ENCODE measurements at regions of chr5 and their contacts with region 1.

Region 1: DNA sequence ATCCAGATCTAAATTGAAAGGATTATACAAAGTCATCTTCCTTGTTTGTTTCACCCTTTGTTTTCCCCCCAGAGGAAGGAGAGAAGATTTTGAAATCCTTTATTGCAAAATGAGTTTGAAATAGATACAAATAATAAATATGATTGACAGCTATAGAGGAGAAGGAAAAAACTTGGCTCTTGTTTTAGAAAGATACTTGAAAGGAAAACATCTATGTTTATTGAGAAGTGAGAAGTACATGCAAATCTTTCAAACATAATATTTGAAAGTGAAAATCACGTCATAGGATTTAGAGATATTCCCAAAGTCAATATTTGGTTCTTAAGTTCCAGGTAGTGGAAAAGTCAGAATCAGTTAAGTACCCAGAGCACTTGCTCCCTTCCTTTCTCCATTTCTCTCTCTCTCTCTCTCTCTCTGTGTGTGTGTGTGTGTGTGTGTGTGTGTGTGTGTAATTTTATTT is 27.2 kb downstream of the PAM start:
- DNase-seq: no peak
- H3K4me3 ChIP-seq: no peak overlapping the region
- H3K27ac ChIP-seq: no peak overlapping the region
- H3K27me3 ChIP-seq: no peaks in the 10 kb centered on the region
- CTCF ChIP-seq: no peak

Region 2: DNA sequence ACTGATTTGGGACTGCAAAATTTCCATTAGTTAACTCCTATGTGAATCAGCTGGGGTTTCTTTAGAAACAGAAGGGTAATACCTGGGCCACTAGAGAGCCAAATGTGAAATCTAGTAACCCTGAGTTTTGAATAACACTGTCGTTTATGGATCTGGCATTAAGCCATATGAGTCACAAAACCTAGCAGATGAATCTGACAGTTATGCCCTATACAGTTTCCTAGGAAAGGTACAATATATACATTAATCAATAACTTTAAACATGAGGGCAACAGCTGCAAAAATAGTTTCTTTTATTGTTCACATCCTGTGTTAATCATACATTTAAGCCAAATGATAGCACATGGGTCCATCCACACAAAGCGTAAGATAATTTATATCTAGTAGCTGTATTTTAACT is 29.6 kb after region 1 on chr5:
- intact Hi-C with region 1: no loop called
- DNase-seq: no peak
- H3K4me3 ChIP-seq: no peak overlapping the region
- H3K27ac ChIP-seq: no peak overlapping the region
- H3K27me3 ChIP-seq: no peaks in the 10 kb centered on the region
- CTCF ChIP-seq: no peak

Region 3: GRCh38 chr5:102893942-102894341 is 111.6 kb after region 1 on chr5:
- intact Hi-C with region 1: no loop called
- DNase-seq: no peak
- H3K4me3 ChIP-seq: no peak overlapping the region
- H3K27ac ChIP-seq: no peak overlapping the region
- H3K27me3 ChIP-seq: no peaks in the 10 kb centered on the region
- CTCF ChIP-seq: no peak

Region 4: DNA sequence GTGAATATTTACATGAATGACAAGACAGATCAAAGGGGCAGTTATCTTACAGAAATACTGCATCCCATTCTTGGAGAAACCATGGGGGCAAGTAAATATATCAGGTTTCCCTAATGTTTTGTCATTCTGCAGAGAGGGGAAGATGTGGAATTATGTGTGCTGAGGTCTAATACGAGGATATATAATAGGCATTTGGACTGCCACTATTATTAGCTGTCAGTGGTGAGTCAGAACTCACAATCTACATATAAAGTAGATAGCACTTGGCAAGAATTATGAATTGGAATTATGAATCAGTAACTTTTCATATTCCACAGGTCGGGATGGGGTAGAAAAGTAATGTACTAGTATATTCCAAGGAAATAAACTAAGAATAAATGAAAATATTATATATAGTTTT is 215.9 kb after region 1 on chr5:
- intact Hi-C with region 1: no loop called
- DNase-seq: no peak
- H3K4me3 ChIP-seq: no peak overlapping the region
- H3K27ac ChIP-seq: no peak overlapping the region
- H3K27me3 ChIP-seq: no peaks in the 10 kb centered on the region
- CTCF ChIP-seq: no peak

Region 5: GRCh38 chr5:103119765-103120606 is 337.6 kb after region 1 on chr5 and contains the starts of genes GIN1 and PPIP5K2:
- intact Hi-C with region 1: loop called in 1 of 2 experiments (anchors 10 kb)
- DNase-seq: peak; percentile 92 to 99 (median 97)
- H3K4me3 ChIP-seq: peak within 1 kb of the TSS; percentile 66 to 97 (median 88)
- H3K27ac ChIP-seq: peak within 1 kb of the TSS; percentile 51 to 99 (median 92)
- H3K27me3 ChIP-seq: no peaks in the 10 kb centered on the region
- CTCF ChIP-seq: peak in 35 of 56 donors; percentile 6 to 55 (median 33)
- total RNA-seq, gene GIN1: 6.3 to 18.9 (median 12.1) TPM
- total RNA-seq, gene PPIP5K2: 44.0 to 92.9 (median 74.6) TPM